ENCODE measurements at regions of chr15 and their contacts with region 1.

Region 1: GRCh38 chr15:89379818-89380217 is 45.2 kb upstream of the POLG start:
- DNase-seq: peak; percentile 95
- H3K4me3 ChIP-seq: no peak overlapping the region
- H3K27ac ChIP-seq: no peak overlapping the region
- H3K4me1 ChIP-seq: peaks cover 42% of the 10 kb centered on the region
- H3K27me3 ChIP-seq: peaks cover 18% of the 10 kb centered on the region
- CTCF ChIP-seq: no peak

Region 2: DNA sequence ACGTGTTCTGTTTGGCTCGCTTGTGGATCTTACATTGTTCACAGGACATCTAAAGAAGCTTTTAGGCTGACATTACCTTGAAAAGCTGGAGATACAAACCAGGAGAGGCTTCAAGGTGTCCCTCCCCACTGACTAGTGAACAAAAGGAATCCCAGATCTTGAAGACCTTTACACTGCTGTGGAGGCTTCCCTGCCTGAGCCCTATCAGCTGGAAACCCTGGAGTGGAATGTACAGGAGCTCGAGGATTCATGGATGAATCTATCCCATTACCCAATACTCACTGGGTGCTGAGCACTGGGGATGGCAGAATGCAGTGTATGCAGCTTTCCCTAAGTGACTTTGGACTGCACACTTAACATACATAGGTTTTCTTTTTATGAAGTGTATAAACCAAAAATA is 384.4 kb before region 1 on chr15:
- CTCF ChIA-PET with region 1: no interaction called
- dilution Hi-C with region 1: no loop called
- in situ Hi-C with region 1: no loop called
- intact Hi-C with region 1: no loop called
- DNase-seq: no peak
- H3K4me3 ChIP-seq: no peak overlapping the region
- H3K27ac ChIP-seq: no peak overlapping the region
- H3K4me1 ChIP-seq: no peaks in the 10 kb centered on the region
- H3K27me3 ChIP-seq: no peaks in the 10 kb centered on the region
- CTCF ChIP-seq: no peak

Region 3: GRCh38 chr15:89367485-89368451 is 12.1 kb before region 1 on chr15:
- CTCF ChIA-PET with region 1: no interaction called
- dilution Hi-C with region 1: no loop called
- in situ Hi-C with region 1: no loop called
- intact Hi-C with region 1: loop called (anchors 2 kb)
- DNase-seq: no peak
- H3K4me3 ChIP-seq: no peak overlapping the region
- H3K27ac ChIP-seq: no peak overlapping the region
- H3K4me1 ChIP-seq: peaks cover 6% of the 10 kb centered on the region
- H3K27me3 ChIP-seq: peaks cover 79% of the 10 kb centered on the region
- CTCF ChIP-seq: no peak